ENCODE measurements at regions of chr22 and their contacts with region 1.

Region 1: GRCh38 chr22:20606041-20606783 is 98.8 kb downstream of the MED15 start:
- DNase-seq: peak; percentile 42
- H3K4me3 Mint-ChIP-seq: no peak overlapping the region
- H3K27ac Mint-ChIP-seq: no peak overlapping the region
- H3K4me1 Mint-ChIP-seq: no peaks in the 10 kb centered on the region
- H3K27me3 Mint-ChIP-seq: peaks cover 4% of the 10 kb centered on the region

Region 2: DNA sequence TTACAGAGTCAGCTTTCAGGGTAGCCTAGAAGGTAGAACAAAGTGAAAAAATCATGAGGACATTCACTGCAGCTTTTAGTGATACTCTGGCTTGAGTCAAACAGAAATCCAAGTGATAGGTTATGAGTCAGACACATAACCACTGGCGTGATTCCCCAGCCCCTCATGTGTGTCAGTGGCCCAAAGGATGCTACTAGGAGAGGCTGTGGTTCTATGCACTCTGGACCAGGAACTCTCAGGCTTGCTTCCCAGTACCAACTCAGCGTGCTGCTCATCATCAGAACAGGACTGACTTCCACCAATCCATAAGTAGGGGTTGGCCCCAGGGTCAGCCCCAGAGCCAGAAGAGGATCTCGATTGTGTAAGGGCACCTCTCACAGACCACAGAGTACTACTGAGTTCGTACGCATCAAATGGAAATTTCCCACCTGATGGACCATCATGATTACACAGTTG is 18.0 kb after region 1 on chr22:
- intact Hi-C with region 1: loop called (anchors 1 kb)
- DNase-seq: peak; percentile 18
- H3K4me3 Mint-ChIP-seq: no peak overlapping the region
- H3K27ac Mint-ChIP-seq: peak overlapping the region; percentile 6
- H3K4me1 Mint-ChIP-seq: peaks cover 14% of the 10 kb centered on the region
- H3K27me3 Mint-ChIP-seq: peaks cover 14% of the 10 kb centered on the region

Region 3: DNA sequence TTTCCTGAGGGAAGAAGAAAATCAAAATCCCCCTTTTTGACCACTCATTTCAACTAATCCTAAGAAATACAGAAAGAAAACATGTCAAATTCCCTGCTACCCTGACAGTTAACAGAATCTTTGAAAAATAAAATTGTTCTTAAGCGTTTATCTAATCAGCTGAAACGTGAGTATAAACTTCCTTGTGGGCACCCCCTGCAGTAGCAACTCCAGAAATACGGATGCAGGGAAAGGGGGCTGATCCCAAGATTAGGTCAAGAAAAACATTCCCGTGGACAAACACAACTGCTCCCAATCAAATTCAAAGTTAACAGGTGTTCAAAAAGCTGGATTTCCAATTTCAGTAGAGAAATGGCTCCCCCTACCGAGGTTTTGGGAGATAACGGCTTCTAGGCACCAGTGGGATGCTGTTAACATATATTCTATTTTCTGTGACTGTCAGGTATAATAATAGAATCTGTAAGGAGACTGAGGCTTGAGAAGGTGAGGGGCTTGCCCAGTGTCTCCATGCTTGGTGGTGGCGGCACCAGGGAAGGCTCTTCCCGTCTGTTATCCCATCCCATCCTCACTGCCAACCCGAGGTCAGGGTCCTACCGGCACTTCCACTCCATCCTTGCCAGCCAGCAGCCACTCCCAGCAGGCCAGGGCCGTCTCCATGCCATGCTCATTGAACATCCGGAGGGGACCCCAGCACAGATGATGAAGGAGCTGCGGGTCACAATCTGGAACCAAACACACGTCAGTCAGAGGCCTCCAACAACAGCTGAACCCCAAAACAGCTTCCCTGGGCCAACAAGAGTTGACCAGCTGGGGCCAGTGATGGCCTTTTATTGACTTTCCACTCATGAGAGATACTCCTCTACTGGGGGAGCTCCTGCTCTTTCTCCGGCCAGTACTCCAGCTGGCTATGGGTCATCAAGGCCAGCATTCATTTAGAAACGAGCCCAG is 135.7 kb after region 1 on chr22:
- intact Hi-C with region 1: loop called (anchors 1 kb)
- DNase-seq: peak; percentile 15
- H3K4me3 Mint-ChIP-seq: no peak overlapping the region
- H3K27ac Mint-ChIP-seq: no peak overlapping the region
- H3K4me1 Mint-ChIP-seq: peaks cover 9% of the 10 kb centered on the region
- H3K27me3 Mint-ChIP-seq: no peaks in the 10 kb centered on the region

Region 4: GRCh38 chr22:20783844-20784723 is 177.9 kb after region 1 on chr22:
- intact Hi-C with region 1: loop called (anchors 1 kb)
- DNase-seq: peak; percentile 6
- H3K4me3 Mint-ChIP-seq: no peak overlapping the region
- H3K27ac Mint-ChIP-seq: no peak overlapping the region
- H3K4me1 Mint-ChIP-seq: peaks cover 7% of the 10 kb centered on the region
- H3K27me3 Mint-ChIP-seq: no peaks in the 10 kb centered on the region